GM12878 (cell line): ENCODE measurements at regions of chr1 and their contacts with region 1.

Region 1: DNA sequence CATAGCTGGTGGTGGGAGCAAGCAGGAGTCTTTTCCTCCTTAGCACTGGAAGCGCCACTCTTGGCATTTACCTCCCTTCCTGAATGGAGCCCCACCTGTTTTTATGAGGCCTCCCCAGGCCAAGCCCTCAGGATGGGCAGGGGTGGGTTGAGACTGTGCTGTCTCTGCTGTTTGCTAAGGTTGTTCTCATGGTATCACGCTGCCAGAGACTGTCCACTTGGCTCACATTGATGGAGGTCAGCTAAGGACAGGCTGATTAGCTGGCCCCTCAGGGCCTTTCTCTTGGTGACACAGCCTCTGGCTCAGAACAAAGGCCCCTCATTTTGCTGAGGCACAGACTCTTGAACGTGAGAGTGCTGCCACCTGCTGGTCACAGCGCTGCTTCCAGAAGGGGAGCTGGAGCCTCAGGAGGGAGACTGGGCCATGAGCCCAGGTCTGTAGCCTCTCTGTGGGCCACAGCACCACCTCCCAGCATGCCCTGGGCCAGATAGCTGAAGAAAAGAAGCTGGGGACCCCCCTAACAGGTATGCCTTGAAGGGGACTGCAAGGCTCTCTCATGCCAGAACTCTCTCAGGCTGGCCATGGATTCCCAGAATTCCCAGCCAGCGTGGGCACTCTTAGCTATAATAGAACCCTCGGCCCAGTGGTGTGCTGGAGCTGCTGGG is 85.6 kb downstream of the CD58 start:
- DNase-seq: no peak
- ATAC-seq: peak; percentile 99
- H3K4me3 ChIP-seq: no peak overlapping the region
- H3K27ac ChIP-seq: no peak overlapping the region
- H3K4me1 ChIP-seq: peaks cover 10% of the 10 kb centered on the region
- H3K27me3 ChIP-seq: no peaks in the 10 kb centered on the region
- CTCF ChIP-seq: peak; percentile 89 to 97 (median 90); a peak in 5 of 6 replicates
- EP300 ChIP-seq: no peak
- POLR2A ChIP-seq: no peak
- RAD21 ChIP-seq: peak; percentile 95

Region 2: DNA sequence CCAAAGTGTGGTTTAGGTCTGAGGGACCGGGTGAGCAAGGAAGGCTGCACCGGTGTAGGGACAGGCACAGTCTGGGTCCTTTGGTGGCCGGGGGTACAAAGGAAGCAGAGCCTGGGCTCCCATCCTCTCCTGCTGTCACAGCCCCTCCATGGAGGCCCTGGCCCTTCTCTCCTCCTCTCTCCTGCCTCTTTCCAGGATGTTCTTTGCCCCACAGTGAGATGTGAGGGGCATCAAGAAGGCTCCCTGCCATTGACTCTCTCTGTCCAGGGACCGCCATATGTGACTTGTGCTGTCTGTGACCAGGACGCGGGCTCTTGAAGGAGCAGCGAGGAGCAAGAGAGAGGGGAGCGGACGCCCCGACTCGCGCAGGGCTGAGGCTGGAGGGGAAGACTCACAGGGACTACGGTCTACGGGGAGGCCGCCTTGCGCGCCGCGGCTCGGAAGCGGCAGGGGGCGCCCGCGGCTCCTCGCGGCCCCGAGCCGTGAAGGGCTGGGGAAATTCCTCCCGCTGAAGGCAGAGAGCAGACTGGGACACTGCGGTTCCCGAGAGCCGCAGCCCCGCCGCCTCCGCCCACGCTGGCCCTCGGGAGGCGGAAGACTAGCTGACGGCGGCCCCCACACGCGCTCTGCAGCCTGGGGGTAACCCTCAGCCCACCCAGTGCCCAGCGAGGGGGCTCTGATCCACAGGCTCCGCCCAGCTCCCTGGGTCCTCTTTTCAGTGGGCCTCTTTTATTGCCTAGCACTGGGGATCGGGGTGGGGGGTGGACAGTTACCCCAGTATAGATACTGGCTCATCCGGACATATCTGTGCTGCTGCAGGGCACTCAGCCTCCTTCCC is 333.2 kb before region 1 on chr1:
- CTCF ChIA-PET with region 1: interaction called, 78 read pairs
- POLR2A ChIA-PET with region 1: no interaction called
- RAD21 ChIA-PET with region 1: interaction called, 31 read pairs
- SMC1A ChIA-PET with region 1: interaction called, 74 read pairs
- in situ Hi-C with region 1: no loop called
- intact Hi-C with region 1: loop called (anchors 1 kb)
- DNase-seq: peak; percentile 23
- ATAC-seq: peak; percentile 99
- H3K4me3 ChIP-seq: peak overlapping the region; percentile 41; the same call in 1 of the 2 replicates
- H3K27ac ChIP-seq: no peak overlapping the region
- H3K4me1 ChIP-seq: peaks cover 6% of the 10 kb centered on the region; the same call in 1 of the 2 replicates
- H3K27me3 ChIP-seq: no peaks in the 10 kb centered on the region; a peak in 2 of 4 replicates
- CTCF ChIP-seq: peak; percentile 80 to 95 (median 83); a peak in 4 of 6 replicates
- EP300 ChIP-seq: peak in 1 of 2 experiments; percentile 47; a peak in 1 of 4 replicates
- POLR2A ChIP-seq: no peak
- RAD21 ChIP-seq: peak; percentile 57

Region 3: GRCh38 chr1:116226017-116226416 is 259.2 kb before region 1 on chr1:
- CTCF ChIA-PET with region 1: interaction called, 25 read pairs
- POLR2A ChIA-PET with region 1: no interaction called
- RAD21 ChIA-PET with region 1: interaction called, 18 read pairs
- SMC1A ChIA-PET with region 1: interaction called, 15 read pairs
- in situ Hi-C with region 1: no loop called
- intact Hi-C with region 1: loop called (anchors 5 kb)
- DNase-seq: peak; percentile 40
- ATAC-seq: peak; percentile 64
- H3K4me3 ChIP-seq: no peak overlapping the region
- H3K27ac ChIP-seq: no peak overlapping the region
- H3K4me1 ChIP-seq: peaks cover 10% of the 10 kb centered on the region
- H3K27me3 ChIP-seq: no peaks in the 10 kb centered on the region
- CTCF ChIP-seq: no peak
- EP300 ChIP-seq: no peak; a peak in 1 of 4 replicates
- POLR2A ChIP-seq: no peak
- RAD21 ChIP-seq: no peak

Region 4: DNA sequence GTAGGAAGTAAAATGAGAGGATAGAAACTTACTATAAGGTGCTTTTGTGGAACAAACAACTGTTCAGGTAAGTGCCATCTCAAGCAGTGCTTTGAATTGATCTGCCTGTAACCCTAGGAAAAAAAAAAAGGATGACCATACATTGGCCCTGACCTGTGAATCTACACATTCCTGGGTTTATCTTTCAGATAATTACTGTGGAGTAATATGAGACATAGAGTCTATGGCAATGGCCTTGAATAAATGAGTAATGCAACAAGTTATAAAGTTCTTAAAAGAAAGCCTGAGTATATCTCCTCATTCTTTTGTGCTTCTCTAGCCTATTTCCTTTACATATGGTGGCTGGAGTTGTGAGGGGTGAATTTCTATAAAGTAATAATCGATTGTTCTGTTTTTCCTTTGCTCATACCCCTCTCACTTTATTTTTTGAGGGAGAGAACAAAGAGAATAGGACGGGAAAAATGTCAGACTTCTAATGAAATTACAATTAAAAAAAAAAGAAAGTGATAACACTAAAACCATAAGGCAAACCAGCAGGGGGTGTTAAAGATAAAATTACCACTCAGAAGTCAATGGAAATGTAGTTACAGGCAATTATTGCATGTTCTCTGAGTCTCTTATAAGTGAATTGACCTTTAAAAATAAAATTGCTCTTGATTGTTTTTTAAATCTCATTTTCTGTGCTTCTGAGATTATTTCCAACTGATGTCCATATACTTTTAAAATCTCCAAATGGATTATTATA is 124.6 kb before region 1 on chr1:
- CTCF ChIA-PET with region 1: interaction called, 75 read pairs
- POLR2A ChIA-PET with region 1: no interaction called
- RAD21 ChIA-PET with region 1: interaction called, 40 read pairs
- SMC1A ChIA-PET with region 1: interaction called, 42 read pairs
- in situ Hi-C with region 1: loop called (anchors 5 kb)
- intact Hi-C with region 1: loop called (anchors 1 kb)
- DNase-seq: no peak
- ATAC-seq: peak; percentile 70
- H3K4me3 ChIP-seq: no peak overlapping the region
- H3K27ac ChIP-seq: no peak overlapping the region
- H3K4me1 ChIP-seq: no peaks in the 10 kb centered on the region
- H3K27me3 ChIP-seq: no peaks in the 10 kb centered on the region
- CTCF ChIP-seq: peak; percentile 21 to 44 (median 32); a peak in 2 of 6 replicates
- EP300 ChIP-seq: no peak
- POLR2A ChIP-seq: no peak
- RAD21 ChIP-seq: peak; percentile 64

Region 5: GRCh38 chr1:116462722-116463121 is 22.5 kb before region 1 on chr1:
- CTCF ChIA-PET with region 1: interaction called, 10 read pairs
- POLR2A ChIA-PET with region 1: no interaction called
- RAD21 ChIA-PET with region 1: no interaction called
- SMC1A ChIA-PET with region 1: interaction called, 4 read pairs
- in situ Hi-C with region 1: no loop called
- intact Hi-C with region 1: no loop called
- DNase-seq: no peak
- ATAC-seq: no peak
- H3K4me3 ChIP-seq: no peak overlapping the region
- H3K27ac ChIP-seq: no peak overlapping the region
- H3K4me1 ChIP-seq: no peaks in the 10 kb centered on the region
- H3K27me3 ChIP-seq: no peaks in the 10 kb centered on the region
- CTCF ChIP-seq: no peak
- EP300 ChIP-seq: no peak
- POLR2A ChIP-seq: no peak
- RAD21 ChIP-seq: no peak

Region 6: GRCh38 chr1:116504308-116505156 is 19.3 kb after region 1 on chr1:
- CTCF ChIA-PET with region 1: interaction called, 230 read pairs
- POLR2A ChIA-PET with region 1: interaction called, 5 read pairs
- RAD21 ChIA-PET with region 1: interaction called, 76 read pairs
- SMC1A ChIA-PET with region 1: interaction called, 81 read pairs
- in situ Hi-C with region 1: no loop called
- intact Hi-C with region 1: no loop called
- DNase-seq: peak; percentile 91
- ATAC-seq: peak; percentile 90
- H3K4me3 ChIP-seq: no peak overlapping the region
- H3K27ac ChIP-seq: peak overlapping the region; percentile 84
- H3K4me1 ChIP-seq: peaks cover 54% of the 10 kb centered on the region
- H3K27me3 ChIP-seq: no peaks in the 10 kb centered on the region
- CTCF ChIP-seq: no peak
- EP300 ChIP-seq: peak; percentile 43 to 69; a peak in 1 of 4 replicates
- POLR2A ChIP-seq: no peak
- RAD21 ChIP-seq: 0 out of 2 replicates have a peak, but pooled peaks have one; percentile 19